ENCODE measurements at regions of chr17 and their contacts with region 1.

Region 1: DNA sequence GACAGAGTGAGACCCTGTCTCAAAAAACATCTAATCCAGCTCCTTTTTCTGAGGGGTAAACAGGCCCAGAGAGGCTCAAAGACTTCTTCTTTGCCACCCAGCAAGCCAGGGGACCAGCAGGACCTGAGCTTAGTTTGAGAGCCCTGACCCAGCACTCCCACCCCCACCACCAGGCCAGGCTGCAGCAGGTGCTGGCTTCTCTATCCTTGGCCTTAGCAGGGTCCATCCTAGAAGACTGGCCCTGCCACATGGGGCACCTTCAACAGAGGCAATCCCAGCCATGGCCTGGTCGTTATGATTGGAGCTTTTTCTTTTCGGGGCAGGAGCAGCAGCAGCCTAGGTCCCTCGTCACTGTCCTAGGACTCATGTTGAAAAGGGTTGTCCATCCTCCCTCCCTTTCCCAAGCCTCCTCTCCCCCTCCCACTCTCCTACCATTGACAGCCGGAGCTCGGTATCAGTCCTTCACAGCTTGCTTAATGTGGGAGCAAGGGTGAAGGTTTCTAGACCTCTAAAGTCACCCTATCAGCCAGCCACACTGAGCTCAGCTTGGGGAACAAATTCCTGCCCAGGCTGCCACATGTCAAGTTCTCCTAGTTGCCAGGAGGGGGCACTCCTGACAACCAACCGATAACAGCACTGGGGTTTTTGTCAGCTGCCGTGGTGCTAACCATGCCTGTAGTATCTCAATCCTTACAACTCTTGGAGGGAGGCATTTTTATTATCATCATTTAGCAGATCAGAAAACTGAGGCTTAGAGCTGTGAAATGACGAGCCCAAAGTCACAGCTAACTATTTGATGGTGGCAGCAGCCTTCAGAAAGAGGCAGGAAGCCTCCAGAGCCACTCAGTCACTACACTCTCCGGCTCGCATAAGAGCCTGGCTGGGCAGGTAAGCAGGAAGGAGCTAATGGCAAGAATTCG is 11.2 kb downstream of the MRPL27 start:
- DNase-seq: peak; percentile 77
- H3K4me3 ChIP-seq: no peak overlapping the region
- H3K27ac ChIP-seq: peak overlapping the region; percentile 17
- H3K4me1 ChIP-seq: peaks cover 4% of the 10 kb centered on the region
- CTCF ChIP-seq: peak; percentile 87

Region 2: DNA sequence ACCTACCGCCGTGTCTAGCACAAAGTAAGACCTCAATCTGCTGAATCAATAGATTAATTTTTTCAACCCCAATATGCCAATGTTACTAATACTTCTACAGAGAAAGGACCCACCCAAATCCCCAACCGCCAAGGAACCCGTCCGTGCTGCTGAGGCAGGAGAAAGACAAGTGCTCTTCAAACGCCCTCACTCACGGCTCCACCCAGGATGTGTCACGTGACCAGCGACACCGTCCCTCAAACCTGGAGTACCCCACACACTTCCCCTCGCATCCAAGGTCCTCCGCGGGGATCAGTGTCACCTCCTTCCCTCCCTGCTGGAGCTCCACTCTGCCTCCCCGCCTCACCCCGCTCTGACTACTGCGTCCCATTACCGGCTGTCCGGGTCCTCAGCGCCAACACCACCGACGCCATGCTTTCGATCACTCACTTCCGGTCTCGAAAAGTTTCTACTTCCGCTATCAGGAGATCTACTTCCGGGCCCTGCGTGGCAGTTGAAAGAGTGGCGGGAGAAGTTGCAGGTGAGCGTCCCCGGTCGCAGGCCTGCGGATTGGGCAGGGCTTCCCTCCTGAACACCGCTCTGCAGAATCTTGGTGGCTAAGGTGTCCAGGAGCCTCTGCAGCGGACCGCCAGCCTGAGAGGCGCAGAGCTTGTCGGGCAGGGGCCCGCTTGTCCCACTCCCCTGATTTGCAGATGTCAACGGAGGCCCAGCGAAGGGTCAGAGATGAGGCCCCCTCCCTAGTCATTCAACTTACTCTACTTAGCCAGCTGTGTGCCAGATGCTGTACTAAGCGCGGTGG is 11.1 kb after region 1 on chr17 and contains the starts of genes EME1 and MRPL27:
- CTCF ChIA-PET with region 1: interaction called, 3 read pairs
- POLR2A ChIA-PET with region 1: interaction called, 17 read pairs
- intact Hi-C with region 1: no loop called
- DNase-seq: peak; percentile 95
- H3K4me3 ChIP-seq: peak within 1 kb of the TSS; percentile 91
- H3K27ac ChIP-seq: peak within 1 kb of the TSS; percentile 83
- H3K4me1 ChIP-seq: peaks cover 15% of the 10 kb centered on the region
- CTCF ChIP-seq: no peak
- total RNA-seq, gene EME1: 25.2 and 34.0 TPM in 2 replicates
- total RNA-seq, gene MRPL27: 80.2 and 85.1 TPM in 2 replicates

Region 3: GRCh38 chr17:50414808-50415207 is 53.0 kb after region 1 on chr17:
- CTCF ChIA-PET with region 1: no interaction called
- POLR2A ChIA-PET with region 1: no interaction called
- intact Hi-C with region 1: no loop called
- DNase-seq: no peak
- H3K4me3 ChIP-seq: no peak overlapping the region
- H3K27ac ChIP-seq: no peak overlapping the region
- H3K4me1 ChIP-seq: no peaks in the 10 kb centered on the region
- CTCF ChIP-seq: no peak

Region 4: DNA sequence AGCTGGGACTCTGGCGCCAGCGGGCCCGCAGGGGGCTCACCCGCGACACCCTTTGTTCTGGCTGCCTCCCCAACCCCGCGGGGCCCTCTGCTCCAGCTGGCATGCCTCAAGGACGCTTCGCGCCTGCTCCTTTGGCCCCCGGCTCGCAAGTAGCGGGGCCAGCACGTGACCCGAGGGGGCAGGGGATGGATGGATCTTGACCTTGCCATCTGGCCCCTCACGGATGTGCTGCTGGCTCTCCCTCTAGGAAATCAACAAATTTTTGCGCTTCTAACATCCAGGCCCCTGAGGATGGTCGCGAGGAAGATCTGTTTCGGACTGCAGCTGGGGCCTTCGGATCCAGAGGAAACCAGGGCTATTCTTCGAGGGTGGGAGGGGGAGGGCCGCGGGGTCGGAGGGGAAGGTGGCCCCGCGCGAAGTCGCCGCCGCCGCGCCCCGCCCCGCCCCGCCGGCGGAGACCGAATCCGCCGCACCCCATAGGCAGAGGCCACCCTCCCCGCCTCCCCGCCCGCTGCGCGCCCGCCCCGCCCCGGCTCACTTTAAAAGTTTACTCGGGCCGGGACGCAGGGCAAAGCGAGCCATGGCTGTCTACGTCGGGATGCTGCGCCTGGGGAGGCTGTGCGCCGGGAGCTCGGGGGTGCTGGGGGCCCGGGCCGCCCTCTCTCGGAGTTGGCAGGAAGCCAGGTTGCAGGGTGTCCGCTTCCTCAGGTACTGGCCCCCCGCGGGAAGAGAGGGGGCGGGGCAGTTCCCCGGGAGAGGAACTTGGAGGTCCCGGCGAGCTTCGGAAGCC is 64.1 kb after region 1 on chr17 and contains the start of gene ACSF2:
- CTCF ChIA-PET with region 1: interaction called, 13 read pairs
- POLR2A ChIA-PET with region 1: no interaction called
- intact Hi-C with region 1: loop called (anchors 1 kb)
- DNase-seq: peak; percentile 67
- H3K4me3 ChIP-seq: peak within 1 kb of the TSS; percentile 76
- H3K27ac ChIP-seq: peak within 1 kb of the TSS; percentile 54
- H3K4me1 ChIP-seq: peaks cover 36% of the 10 kb centered on the region
- CTCF ChIP-seq: no peak
- total RNA-seq, gene ACSF2: 38.6 and 48.1 TPM in 2 replicates